GM12878 (cell line): ENCODE measurements at regions of chr4 and their contacts with region 1.

Region 1: GRCh38 chr4:1899149-1900086 is 28.2 kb downstream of the NSD2 start:
- DNase-seq: peak; percentile 53
- ATAC-seq: peak; percentile 98
- H3K4me3 ChIP-seq: no peak overlapping the region
- H3K27ac ChIP-seq: no peak overlapping the region; the same call in 1 of the 2 replicates
- H3K4me1 ChIP-seq: peaks cover 6% of the 10 kb centered on the region
- H3K27me3 ChIP-seq: no peaks in the 10 kb centered on the region
- CTCF ChIP-seq: peak; percentile 62 to 93 (median 91)
- EP300 ChIP-seq: no peak
- POLR2A ChIP-seq: no peak
- RAD21 ChIP-seq: peak; percentile 89

Region 2: DNA sequence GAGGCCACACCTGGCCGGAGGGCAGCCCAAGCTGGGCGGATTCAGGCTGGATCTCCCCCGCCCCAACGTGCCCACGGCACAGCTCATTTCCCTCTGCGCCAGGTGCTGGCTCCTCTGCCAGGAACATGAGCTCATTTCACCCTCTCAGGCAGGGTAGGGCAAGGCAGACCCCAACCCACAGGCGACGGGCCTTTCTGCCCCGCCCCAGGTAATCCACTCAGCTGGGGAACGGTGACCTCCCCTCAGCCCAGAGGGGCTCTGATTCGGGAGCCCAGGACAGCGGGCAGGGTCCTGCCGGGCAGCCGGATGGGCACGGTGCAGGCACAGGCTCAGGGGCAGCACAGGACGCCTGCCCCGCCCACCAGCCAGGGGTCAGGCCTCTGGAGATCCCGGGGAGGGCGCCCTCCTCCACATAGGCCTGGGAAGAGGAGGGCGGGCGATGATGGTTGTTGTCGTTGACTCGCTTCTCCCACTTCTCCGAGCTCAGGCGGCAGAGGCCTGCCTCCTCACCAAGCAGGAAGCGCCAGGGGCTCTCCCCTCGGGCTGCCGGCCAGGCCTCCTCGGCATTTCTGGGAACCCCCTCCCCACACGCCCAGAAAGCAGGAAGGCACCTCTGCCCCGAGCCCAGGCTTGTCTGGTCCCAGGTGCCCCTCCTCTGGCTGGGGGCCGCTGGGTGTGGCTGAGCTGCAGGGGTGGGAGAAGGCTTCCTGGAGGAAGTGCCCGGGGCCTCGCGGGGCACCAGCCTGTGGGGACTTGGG is 147.0 kb before region 1 on chr4:
- CTCF ChIA-PET with region 1: interaction called, 38 read pairs
- POLR2A ChIA-PET with region 1: interaction called, 4 read pairs
- RAD21 ChIA-PET with region 1: interaction called, 12 read pairs
- SMC1A ChIA-PET with region 1: interaction called, 9 read pairs
- in situ Hi-C with region 1: no loop called
- intact Hi-C with region 1: loop called (anchors 1 kb)
- DNase-seq: no peak
- ATAC-seq: no peak
- H3K4me3 ChIP-seq: no peak overlapping the region
- H3K27ac ChIP-seq: no peak overlapping the region
- H3K4me1 ChIP-seq: no peaks in the 10 kb centered on the region
- H3K27me3 ChIP-seq: no peaks in the 10 kb centered on the region
- CTCF ChIP-seq: no peak
- EP300 ChIP-seq: no peak
- POLR2A ChIP-seq: no peak
- RAD21 ChIP-seq: no peak

Region 3: DNA sequence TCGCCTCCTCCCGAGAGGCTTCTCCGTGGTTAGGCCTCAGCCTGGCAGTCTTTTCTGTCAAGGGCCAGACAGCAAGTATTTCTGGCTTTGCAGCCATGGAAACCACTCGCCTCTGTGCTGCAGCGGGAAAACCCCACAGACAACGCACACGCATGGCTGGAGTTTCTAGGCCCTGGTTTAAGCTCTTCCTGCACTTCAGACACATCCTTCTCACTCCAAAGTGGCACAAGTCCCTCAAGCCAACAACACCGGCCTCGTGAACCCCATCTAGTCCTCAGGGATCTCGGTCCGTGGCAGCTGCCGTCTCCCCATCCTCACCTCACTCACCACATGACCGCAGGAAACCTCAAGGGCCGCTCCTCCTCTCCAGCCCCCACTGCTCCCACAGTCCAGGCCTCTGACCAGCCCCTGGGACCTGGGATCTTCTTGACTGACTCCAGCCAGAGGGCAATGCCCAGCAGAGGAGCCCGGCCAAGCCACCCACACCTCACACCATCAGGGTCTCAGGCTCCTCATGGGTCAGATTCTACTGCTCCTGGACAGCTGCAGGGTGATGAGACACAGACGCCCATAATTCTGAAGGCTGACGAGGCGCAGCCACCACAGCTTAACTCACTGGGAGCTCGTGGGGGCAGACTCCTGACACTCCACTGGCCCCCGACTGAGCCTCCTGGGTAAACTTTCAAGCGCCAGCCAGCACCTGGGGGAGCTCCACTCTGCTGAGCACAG is 65.2 kb before region 1 on chr4:
- CTCF ChIA-PET with region 1: interaction called, 20 read pairs
- POLR2A ChIA-PET with region 1: no interaction called
- RAD21 ChIA-PET with region 1: interaction called, 16 read pairs
- SMC1A ChIA-PET with region 1: interaction called, 25 read pairs
- in situ Hi-C with region 1: no loop called
- intact Hi-C with region 1: loop called (anchors 1 kb)
- DNase-seq: peak; percentile 55
- ATAC-seq: peak; percentile 96
- H3K4me3 ChIP-seq: no peak overlapping the region
- H3K27ac ChIP-seq: peak overlapping the region; percentile 87
- H3K4me1 ChIP-seq: peaks cover 30% of the 10 kb centered on the region
- H3K27me3 ChIP-seq: no peaks in the 10 kb centered on the region
- CTCF ChIP-seq: no peak; a peak in 1 of 6 replicates
- EP300 ChIP-seq: no peak
- POLR2A ChIP-seq: peak; percentile 45; the same call in 1 of the 2 replicates
- RAD21 ChIP-seq: no peak

Region 4: DNA sequence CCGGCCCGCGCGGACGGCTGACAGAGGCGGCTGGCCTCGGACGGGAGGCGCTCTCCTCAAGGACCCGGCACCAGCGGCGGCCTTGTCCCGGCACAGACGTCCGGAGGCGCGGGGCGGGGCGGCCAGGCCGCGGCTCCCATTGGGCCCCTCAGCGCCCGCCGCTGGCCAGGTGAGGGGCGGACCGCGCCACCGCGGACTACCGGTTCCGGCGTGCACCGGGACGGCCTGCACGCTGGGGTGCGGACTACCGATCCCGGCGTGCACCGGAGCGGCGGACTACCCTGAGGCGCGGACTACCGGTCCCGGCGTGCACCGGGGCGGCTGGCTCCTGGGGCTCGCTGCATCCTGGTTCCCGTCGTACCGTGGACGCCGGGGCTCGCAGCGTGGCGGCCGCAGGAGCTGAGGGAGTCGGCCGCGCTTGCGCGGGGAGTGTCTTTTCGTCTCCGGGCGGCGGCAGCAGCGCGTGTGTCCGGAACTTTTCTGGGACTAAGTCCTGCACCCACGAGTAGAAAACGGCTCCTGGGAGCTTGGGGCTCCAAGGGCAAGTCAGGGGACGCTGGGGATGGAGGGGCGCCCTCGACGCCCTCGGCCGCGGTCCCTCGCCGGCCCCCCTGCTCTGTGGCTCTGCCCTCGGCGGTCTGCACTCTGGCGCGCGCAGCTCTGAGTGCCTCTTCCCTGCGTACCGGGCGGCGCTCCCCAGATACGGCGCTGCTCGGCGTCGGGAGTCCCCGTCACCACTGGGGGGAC is 43.2 kb before region 1 on chr4 and contains the start of gene LETM1:
- CTCF ChIA-PET with region 1: interaction called, 13 read pairs
- POLR2A ChIA-PET with region 1: interaction called, 4 read pairs
- RAD21 ChIA-PET with region 1: interaction called, 11 read pairs
- SMC1A ChIA-PET with region 1: interaction called, 14 read pairs
- in situ Hi-C with region 1: no loop called
- intact Hi-C with region 1: loop called (anchors 5 kb)
- DNase-seq: peak; percentile 83
- ATAC-seq: peak; percentile 96
- H3K4me3 ChIP-seq: peak within 1 kb of the TSS; percentile 95
- H3K27ac ChIP-seq: peak within 1 kb of the TSS; percentile 67
- H3K4me1 ChIP-seq: peaks cover 13% of the 10 kb centered on the region
- H3K27me3 ChIP-seq: no peaks in the 10 kb centered on the region
- CTCF ChIP-seq: no peak; a peak in 1 of 6 replicates
- EP300 ChIP-seq: no peak
- POLR2A ChIP-seq: peak; percentile 88
- RAD21 ChIP-seq: no peak
- polyA plus RNA-seq, gene LETM1: 2.6 to 4.0 TPM

Region 5: DNA sequence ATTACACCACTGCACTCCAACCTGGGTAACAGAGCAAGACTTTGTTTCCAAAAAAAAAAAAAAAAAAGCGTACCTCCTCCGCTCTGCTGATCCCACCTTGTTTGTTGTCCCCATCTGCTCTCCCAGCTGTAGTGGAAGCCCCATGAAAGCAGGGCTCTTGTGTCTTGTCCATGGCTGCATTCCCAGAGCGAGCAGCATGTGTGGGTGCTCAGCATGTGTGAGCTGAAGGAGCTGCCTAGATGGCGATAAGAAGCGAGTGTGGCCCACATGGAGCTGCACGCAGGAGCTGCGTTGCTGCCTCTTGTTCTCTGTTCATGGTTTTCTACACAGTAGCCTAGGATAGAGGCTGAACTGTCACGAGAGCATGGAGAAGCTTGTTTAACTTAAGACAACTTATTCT is 15.8 kb before region 1 on chr4:
- CTCF ChIA-PET with region 1: interaction called, 37 read pairs
- POLR2A ChIA-PET with region 1: interaction called, 3 read pairs
- RAD21 ChIA-PET with region 1: interaction called, 5 read pairs
- SMC1A ChIA-PET with region 1: interaction called, 11 read pairs
- in situ Hi-C with region 1: no loop called
- intact Hi-C with region 1: no loop called
- DNase-seq: no peak
- ATAC-seq: no peak
- H3K4me3 ChIP-seq: no peak overlapping the region
- H3K27ac ChIP-seq: no peak overlapping the region
- H3K4me1 ChIP-seq: peaks cover 8% of the 10 kb centered on the region
- H3K27me3 ChIP-seq: no peaks in the 10 kb centered on the region
- CTCF ChIP-seq: no peak
- EP300 ChIP-seq: no peak
- POLR2A ChIP-seq: 0 out of 2 replicates have a peak, but pooled peaks have one; percentile 23
- RAD21 ChIP-seq: no peak